HEK293T (cell line): ENCODE measurements at regions of chr2 and their contacts with region 1.

Region 1: GRCh38 chr2:63841254-63842022 is at the start of gene UGP2:
- DNase-seq: peak; percentile 71

Region 2: GRCh38 chr2:63698825-63699548 is 142.5 kb before region 1 on chr2:
- CTCF ChIA-PET with region 1: interaction called, 12 read pairs
- POLR2A ChIA-PET with region 1: interaction called, 20 read pairs
- DNase-seq: peak; percentile 54

Region 3: DNA sequence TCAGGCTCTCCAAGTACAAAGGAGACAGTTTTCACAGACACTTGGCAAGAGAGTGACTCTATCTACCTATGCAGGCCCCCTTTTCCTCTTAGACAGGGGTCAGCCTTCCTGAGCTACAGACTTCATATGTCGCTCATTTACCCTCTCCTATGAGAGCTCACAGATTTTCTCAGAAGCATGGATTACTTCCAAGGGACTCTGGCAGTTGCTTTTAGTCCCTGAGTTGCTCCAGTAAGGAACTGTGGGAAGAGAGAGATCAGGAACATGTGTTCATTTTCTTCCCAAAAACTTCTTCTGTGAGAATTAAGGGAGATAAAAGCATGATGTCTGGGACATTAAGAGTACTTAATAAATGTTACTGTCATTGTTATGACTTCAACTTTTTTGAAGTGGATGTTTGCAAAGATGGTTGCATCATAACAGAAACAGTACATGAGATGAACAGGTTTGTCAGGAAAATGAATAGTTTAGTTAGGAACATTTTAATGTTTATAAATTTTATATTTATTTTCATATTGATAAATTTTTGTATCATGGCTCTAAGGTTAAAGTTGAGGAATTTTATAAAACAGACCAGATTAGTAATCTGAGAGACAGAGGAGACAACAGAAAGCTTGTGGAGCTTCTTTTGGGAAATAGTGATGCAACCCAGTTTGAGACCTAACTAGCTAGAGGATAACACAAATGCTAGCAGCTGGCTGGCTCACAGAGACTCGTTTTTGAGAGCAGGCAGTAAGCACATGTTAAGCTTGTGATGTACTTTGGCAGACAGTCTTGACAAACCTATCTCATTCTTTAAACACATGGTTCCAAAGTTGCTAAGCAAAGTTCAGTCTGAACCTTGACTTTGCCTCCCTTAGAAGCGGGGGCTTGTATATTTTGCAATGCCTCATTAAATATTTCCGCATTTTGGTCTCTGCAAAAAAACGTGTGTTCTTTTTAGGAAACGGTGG is 21.4 kb before region 1 on chr2:
- CTCF ChIA-PET with region 1: interaction called, 3 read pairs
- POLR2A ChIA-PET with region 1: interaction called, 19 read pairs
- DNase-seq: no peak

Region 4: DNA sequence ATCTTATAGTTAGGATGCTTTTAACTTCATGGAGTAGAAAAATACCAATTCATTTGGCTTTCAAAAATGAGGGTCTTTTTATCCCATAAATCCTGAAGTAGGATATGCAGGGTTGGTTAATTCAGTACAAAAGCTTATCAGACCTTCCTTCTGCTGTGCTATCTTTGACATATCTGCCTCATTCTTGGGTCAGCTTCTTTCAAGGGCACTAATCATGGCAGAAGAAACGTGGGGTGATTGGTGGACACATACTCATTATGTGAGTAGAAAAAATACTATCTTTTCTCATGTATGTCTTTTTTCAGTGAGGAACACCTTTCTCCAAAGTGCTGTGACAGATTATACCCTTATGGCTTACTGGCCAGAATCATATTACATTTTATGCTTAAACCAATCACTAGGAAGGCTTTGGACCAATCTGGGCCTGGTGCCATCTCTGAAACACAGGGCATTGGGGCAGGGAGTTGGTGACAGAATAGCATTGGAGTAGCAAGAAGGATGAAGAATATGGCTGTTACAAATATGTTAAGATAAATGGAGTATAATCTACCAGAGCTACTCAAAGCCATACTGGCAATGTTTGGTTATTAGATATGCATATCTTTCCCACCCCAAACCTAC is 10.4 kb after region 1 on chr2:
- CTCF ChIA-PET with region 1: no interaction called
- POLR2A ChIA-PET with region 1: interaction called, 11 read pairs
- DNase-seq: no peak

Region 5: DNA sequence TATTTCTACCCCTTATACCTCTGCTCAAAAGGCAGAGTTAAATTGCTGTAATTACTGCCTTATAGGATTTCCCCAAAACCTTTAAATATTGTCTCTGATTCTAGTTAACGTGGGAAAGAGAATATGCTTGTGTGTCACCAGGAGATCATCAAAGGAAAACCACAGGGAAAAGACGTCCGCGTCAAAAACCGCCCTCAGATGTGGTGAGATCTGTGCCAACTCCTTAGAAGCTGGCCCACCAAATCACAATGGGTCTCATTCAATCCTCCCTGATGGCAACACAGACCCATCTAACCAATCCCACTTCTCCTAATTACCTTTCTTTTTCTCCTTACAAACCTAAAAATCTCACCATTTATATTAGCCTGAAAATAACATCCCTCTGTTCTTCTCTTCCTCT is 152.4 kb after region 1 on chr2:
- CTCF ChIA-PET with region 1: no interaction called
- POLR2A ChIA-PET with region 1: no interaction called
- DNase-seq: no peak